ENCODE measurements at regions of chr3 and their contacts with region 1.

Region 1: DNA sequence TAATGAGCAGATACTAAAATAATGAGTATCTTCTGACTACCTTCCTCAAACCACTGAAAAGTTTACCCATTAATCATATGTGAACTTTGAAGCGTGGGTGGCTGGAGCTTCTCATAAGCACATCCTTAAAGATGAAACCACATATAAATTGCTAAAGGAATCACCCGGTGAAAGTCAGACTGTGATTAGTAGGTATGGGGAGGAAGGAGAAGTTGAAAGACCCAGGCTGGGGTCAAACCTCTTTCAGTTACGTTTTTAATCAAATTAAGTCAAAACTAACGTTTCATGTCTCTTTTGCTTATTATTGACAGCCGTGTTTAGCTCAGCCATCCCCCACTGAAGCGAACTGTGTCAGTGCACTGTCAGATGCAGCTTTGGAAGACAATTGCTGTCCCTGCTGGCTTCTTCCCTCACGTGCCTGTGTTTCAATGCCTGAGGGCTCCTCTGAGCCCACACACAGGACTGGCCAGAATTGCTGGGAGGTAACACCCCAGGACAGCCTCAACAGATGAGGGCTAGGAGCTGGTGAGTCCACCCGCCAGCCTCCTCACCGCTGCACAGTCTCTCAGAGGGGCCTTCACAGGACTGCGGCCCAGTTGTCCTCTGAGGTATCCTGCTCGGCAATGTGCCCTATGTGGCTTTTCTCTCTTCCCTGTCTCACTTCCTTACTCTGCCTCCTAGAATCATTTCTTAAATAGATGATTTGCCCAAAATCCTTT is 29.3 kb upstream of the SH3BP5 start:
- DNase-seq: peak; percentile 29
- H3K4me3 Mint-ChIP-seq: peak overlapping the region; percentile 38
- H3K27ac Mint-ChIP-seq: peak overlapping the region; percentile 80
- H3K4me1 Mint-ChIP-seq: peaks cover 51% of the 10 kb centered on the region
- H3K27me3 Mint-ChIP-seq: no peaks in the 10 kb centered on the region

Region 2: GRCh38 chr3:15268033-15268631 is 93.5 kb before region 1 on chr3:
- intact Hi-C with region 1: loop called (anchors 1 kb)
- DNase-seq: peak; percentile 74
- H3K4me3 Mint-ChIP-seq: no peak overlapping the region
- H3K27ac Mint-ChIP-seq: no peak overlapping the region
- H3K4me1 Mint-ChIP-seq: peaks cover 73% of the 10 kb centered on the region
- H3K27me3 Mint-ChIP-seq: no peaks in the 10 kb centered on the region

Region 3: GRCh38 chr3:15284121-15284889 is 77.3 kb before region 1 on chr3:
- intact Hi-C with region 1: no loop called
- DNase-seq: no peak
- H3K4me3 Mint-ChIP-seq: no peak overlapping the region
- H3K27ac Mint-ChIP-seq: no peak overlapping the region
- H3K4me1 Mint-ChIP-seq: peaks cover 78% of the 10 kb centered on the region
- H3K27me3 Mint-ChIP-seq: no peaks in the 10 kb centered on the region

Region 4: DNA sequence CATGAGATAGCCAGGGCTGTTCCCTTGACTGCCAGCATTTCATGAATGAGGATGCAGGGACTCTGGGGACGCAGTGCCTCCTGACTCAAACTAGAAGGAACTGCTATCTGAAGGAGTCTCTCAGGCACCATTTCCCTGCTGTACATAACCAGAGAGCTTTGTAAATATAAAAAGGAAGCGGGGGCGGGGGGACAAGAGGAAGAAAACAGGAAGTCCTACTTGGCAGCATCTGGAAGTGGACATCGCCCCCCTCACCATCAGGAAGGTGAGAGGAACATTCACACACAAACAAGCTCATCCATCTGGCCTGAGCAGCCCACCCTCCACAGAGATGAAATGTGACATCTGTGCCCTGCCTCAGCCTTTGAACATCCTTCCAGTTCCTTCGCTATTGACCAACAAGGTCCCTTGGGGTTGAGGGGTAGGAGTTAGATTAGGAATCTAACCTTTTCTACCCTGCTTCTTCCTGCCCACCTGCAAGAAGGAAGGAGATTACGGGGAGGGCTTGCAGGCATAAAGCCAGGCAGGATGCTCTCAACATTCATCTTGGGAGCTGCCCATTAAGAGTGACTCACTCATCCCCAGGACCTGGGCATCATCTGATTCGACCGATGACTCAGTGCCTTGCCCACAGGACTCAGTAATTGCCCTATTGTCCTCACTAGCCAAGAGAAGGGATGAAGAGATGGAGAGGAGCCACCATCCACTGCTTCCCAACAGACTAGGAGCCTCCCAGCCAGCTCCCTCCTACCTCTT is 61.2 kb before region 1 on chr3:
- intact Hi-C with region 1: loop called (anchors 2 kb)
- DNase-seq: no peak
- H3K4me3 Mint-ChIP-seq: peak overlapping the region; percentile 35
- H3K27ac Mint-ChIP-seq: peak overlapping the region; percentile 6
- H3K4me1 Mint-ChIP-seq: peaks cover 84% of the 10 kb centered on the region
- H3K27me3 Mint-ChIP-seq: no peaks in the 10 kb centered on the region

Region 5: GRCh38 chr3:15321349-15321748 is 40.3 kb before region 1 on chr3:
- intact Hi-C with region 1: no loop called
- DNase-seq: no peak
- H3K4me3 Mint-ChIP-seq: no peak overlapping the region
- H3K27ac Mint-ChIP-seq: no peak overlapping the region
- H3K4me1 Mint-ChIP-seq: peaks cover 79% of the 10 kb centered on the region
- H3K27me3 Mint-ChIP-seq: no peaks in the 10 kb centered on the region

Region 6: GRCh38 chr3:15332405-15333098 is 29.1 kb before region 1 on chr3 and contains the start of gene SH3BP5:
- intact Hi-C with region 1: loop called (anchors 1 kb)
- DNase-seq: peak; percentile 73
- H3K4me3 Mint-ChIP-seq: peak within 1 kb of the TSS; percentile 94
- H3K27ac Mint-ChIP-seq: peak within 1 kb of the TSS; percentile 89
- H3K4me1 Mint-ChIP-seq: peaks cover 72% of the 10 kb centered on the region
- H3K27me3 Mint-ChIP-seq: no peaks in the 10 kb centered on the region
- total RNA-seq, gene SH3BP5: 28.0 and 30.3 TPM in 2 replicates

Region 7: GRCh38 chr3:15427182-15427880 is 65.7 kb after region 1 on chr3 and contains the starts of genes EAF1 and METTL6:
- intact Hi-C with region 1: loop called (anchors 5 kb)
- DNase-seq: peak; percentile 81
- H3K4me3 Mint-ChIP-seq: peak within 1 kb of the TSS; percentile 97
- H3K27ac Mint-ChIP-seq: peak within 1 kb of the TSS; percentile 96
- H3K4me1 Mint-ChIP-seq: peaks cover 61% of the 10 kb centered on the region
- H3K27me3 Mint-ChIP-seq: no peaks in the 10 kb centered on the region
- total RNA-seq, gene EAF1: 27.3 and 27.8 TPM in 2 replicates
- total RNA-seq, gene METTL6: 15.0 and 15.8 TPM in 2 replicates

Region 8: GRCh38 chr3:15535732-15536131 is 174.1 kb after region 1 on chr3:
- intact Hi-C with region 1: loop called (anchors 5 kb)
- DNase-seq: peak; percentile 32
- H3K4me3 Mint-ChIP-seq: peak overlapping the region; percentile 60
- H3K27ac Mint-ChIP-seq: peak overlapping the region; percentile 75
- H3K4me1 Mint-ChIP-seq: peaks cover 55% of the 10 kb centered on the region
- H3K27me3 Mint-ChIP-seq: no peaks in the 10 kb centered on the region

Region 9: GRCh38 chr3:15797642-15798303 is 436.1 kb after region 1 on chr3 and contains the start of gene ANKRD28:
- intact Hi-C with region 1: loop called (anchors 2 kb)
- DNase-seq: peak; percentile 27
- H3K4me3 Mint-ChIP-seq: peak within 1 kb of the TSS; percentile 88
- H3K27ac Mint-ChIP-seq: peak within 1 kb of the TSS; percentile 99
- H3K4me1 Mint-ChIP-seq: peaks cover 92% of the 10 kb centered on the region
- H3K27me3 Mint-ChIP-seq: no peaks in the 10 kb centered on the region
- total RNA-seq, gene ANKRD28: 39.6 and 42.9 TPM in 2 replicates

Measured in activated T-helper 1 cell treated with anti-CD3 and anti-CD28 coated beads, Interleukin-12 subunit alpha, Interleukin-12 subunit beta, Interleukin-2, Interleukin-4 antibody, amounts not matched to agents 30 ng/mL and 10 ng/mL and 1 ng/mL, durations not matched to agents 14 hours and 24 hours and 36 hours (primary cell).